ENCODE measurements at regions of chr1 and their contacts with region 1.

Region 1: GRCh38 chr1:156728597-156729462 is at the start of gene ISG20L2:
- DNase-seq: peak; percentile 98
- H3K4me3 Mint-ChIP-seq: no peak within 1 kb of the TSS
- H3K27ac Mint-ChIP-seq: no peak within 1 kb of the TSS
- H3K4me1 Mint-ChIP-seq: peaks cover 27% of the 10 kb centered on the region
- H3K27me3 Mint-ChIP-seq: no peaks in the 10 kb centered on the region
- CTCF ChIP-seq: no peak
- total RNA-seq, gene ISG20L2: 49.9 and 57.5 TPM in 2 replicates

Region 2: DNA sequence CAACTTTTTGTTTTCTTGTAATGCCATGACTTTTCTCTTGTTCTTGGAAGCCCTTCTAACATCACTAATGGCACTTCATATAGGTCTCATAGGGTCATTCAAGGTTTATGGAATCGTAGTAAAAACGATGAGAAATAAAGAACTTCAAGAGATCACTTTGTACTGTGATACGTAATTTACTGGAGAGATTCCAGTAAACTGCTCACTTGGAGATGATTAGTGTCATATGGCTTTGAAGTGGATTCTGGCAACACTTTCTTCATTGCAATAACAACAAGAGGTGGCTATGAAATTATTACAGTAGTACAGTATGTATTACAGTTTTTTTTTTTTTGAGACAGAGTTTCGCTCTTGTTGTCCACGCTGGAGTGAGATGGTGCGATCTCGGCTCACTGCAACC is 1304.7 kb before region 1 on chr1:
- CTCF ChIA-PET with region 1: no interaction called
- POLR2A ChIA-PET with region 1: no interaction called
- intact Hi-C with region 1: no loop called
- DNase-seq: no peak
- H3K4me3 Mint-ChIP-seq: no peak overlapping the region
- H3K27ac Mint-ChIP-seq: no peak overlapping the region
- H3K4me1 Mint-ChIP-seq: no peaks in the 10 kb centered on the region
- H3K27me3 Mint-ChIP-seq: no peaks in the 10 kb centered on the region
- CTCF ChIP-seq: no peak

Region 3: DNA sequence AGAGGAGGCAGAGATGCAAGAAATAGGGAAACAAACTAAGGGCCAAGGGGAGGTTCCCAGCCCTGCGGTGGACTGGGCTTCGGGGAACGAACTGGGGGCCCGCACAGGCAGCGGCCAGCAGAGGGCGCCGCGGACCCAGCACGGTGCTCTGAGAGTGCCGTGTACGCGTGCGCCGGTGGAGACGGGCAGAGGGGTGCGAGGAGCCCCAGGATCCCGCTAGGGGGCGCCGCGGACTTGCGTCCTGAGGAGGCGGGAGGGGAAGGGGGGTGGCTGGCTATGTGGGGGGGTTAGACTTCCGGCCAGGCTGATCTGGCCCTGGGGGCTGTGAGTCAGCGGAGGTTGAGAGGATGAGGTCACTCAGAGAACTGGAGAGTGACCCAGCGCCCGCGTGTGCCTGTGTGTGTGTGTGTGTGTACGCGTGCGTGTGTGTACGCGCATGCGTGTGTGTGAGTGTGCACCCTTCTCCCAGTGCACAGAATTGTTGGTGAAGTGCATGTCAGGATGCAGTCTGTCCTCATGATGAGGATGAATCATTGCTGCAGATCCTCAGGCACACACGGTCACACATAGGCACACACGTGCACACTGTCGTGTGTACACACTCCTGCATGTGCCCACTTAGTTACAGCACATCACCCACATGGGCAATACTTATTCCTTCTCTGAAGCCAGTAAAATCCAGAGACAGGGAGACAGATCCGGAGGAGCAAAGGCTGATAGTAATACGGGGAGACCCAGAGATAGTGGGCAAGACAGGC is 68.7 kb before region 1 on chr1:
- CTCF ChIA-PET with region 1: interaction called, 127 read pairs
- POLR2A ChIA-PET with region 1: interaction called, 58 read pairs
- intact Hi-C with region 1: loop called (anchors 1 kb)
- DNase-seq: peak; percentile 99
- H3K4me3 Mint-ChIP-seq: peak overlapping the region; percentile 87
- H3K27ac Mint-ChIP-seq: peak overlapping the region; percentile 83
- H3K4me1 Mint-ChIP-seq: peaks cover 49% of the 10 kb centered on the region
- H3K27me3 Mint-ChIP-seq: no peaks in the 10 kb centered on the region
- CTCF ChIP-seq: peak; percentile 98

Region 4: DNA sequence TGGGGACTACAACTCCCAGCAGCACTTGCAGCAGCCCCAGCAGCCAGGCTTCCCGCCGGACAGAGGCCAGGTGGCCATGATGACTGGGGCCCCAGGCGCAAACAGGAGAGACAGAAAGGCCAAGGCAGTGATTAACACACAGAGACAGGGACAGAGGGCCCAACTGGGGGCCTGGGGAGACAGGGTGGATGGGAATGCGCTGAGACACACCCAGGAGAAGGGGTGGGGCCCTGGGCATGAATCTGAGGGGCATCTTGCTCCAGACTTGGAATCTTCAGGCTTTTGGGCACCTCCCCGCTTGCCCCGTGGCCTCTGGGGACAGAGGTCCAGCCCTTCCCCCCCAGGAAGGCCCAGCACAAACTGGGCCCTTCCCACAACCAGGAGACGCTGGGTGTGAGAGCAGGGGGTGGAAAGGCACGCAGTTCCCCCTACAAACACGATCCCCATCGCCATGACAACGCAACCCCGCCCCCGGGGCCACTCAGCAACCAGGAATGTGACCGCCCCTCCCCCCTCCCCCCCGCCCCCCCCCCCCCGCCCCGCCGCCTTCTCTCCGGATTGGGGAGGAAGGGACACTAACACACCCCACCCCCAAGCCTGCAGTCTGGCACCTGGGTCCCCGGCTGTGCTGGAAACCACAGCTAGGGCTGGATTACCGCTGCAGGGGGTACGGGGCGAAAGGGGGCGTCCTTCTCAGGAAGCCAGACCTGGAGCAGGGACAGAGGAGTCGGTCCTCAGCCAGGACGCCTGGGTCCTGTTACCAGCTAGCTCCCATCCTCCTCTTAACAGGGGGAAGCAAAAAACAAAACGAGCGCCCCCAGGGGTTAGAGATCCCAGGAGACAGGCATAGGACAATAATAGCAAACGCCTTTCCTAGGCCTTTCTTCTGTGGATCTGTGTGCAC is 18.1 kb after region 1 on chr1:
- CTCF ChIA-PET with region 1: interaction called, 136 read pairs
- POLR2A ChIA-PET with region 1: interaction called, 231 read pairs
- intact Hi-C with region 1: loop called (anchors 1 kb)
- DNase-seq: peak; percentile 93
- H3K4me3 Mint-ChIP-seq: peak overlapping the region; percentile 79
- H3K27ac Mint-ChIP-seq: peak overlapping the region; percentile 99
- H3K4me1 Mint-ChIP-seq: peaks cover 60% of the 10 kb centered on the region
- H3K27me3 Mint-ChIP-seq: no peaks in the 10 kb centered on the region
- CTCF ChIP-seq: no peak

Region 5: DNA sequence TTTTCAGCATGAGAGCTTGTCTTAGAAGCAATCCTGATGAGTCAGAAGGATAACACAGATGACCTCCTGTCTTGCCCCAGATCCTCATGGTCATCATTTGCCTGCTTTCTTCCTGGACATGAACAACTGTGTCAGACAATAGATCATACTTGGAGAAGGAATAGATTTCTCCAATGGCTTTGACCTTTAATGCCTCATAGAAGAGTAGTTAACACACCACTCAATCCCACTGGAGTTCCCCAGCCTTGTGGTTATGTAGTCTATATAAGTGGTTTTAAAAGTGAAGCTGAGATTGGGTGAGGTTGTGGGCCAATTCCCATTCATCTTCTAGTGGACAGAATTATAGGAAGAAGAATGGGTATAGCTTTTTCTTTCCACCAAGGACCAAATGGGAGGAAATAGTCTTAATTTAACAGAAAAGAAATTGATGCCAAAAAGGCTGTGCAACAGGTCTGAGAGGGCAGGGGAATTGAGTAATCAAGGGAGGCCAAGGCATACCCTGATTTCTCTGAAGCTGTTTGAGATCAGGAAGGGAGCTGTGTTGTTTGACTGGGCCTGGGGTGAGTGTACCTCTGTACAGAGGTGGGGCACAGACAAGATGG is 52.9 kb after region 1 on chr1:
- CTCF ChIA-PET with region 1: interaction called, 15 read pairs
- POLR2A ChIA-PET with region 1: interaction called, 9 read pairs
- intact Hi-C with region 1: no loop called
- DNase-seq: no peak
- H3K4me3 Mint-ChIP-seq: no peak overlapping the region
- H3K27ac Mint-ChIP-seq: peak overlapping the region; percentile 66
- H3K4me1 Mint-ChIP-seq: peaks cover 28% of the 10 kb centered on the region
- H3K27me3 Mint-ChIP-seq: no peaks in the 10 kb centered on the region
- CTCF ChIP-seq: no peak

Region 6: GRCh38 chr1:156860113-156860627 is 131.3 kb after region 1 on chr1:
- CTCF ChIA-PET with region 1: interaction called, 41 read pairs
- POLR2A ChIA-PET with region 1: interaction called, 3 read pairs
- intact Hi-C with region 1: loop called (anchors 1 kb)
- DNase-seq: peak; percentile 60
- H3K4me3 Mint-ChIP-seq: peak overlapping the region; percentile 57
- H3K27ac Mint-ChIP-seq: no peak overlapping the region
- H3K4me1 Mint-ChIP-seq: peaks cover 18% of the 10 kb centered on the region
- H3K27me3 Mint-ChIP-seq: peaks cover 53% of the 10 kb centered on the region
- CTCF ChIP-seq: peak; percentile 98